Activated B cell treated with CpG ODN at 0.5 μM for 24 hours (primary cell): ENCODE measurements at regions of chr2 and their contacts with region 1.

Region 1: GRCh38 chr2:33511141-33511540 is 34.7 kb downstream of the RASGRP3 start:
- DNase-seq: no peak
- ATAC-seq: no peak
- H3K4me3 Mint-ChIP-seq: no peak overlapping the region
- H3K27ac Mint-ChIP-seq: peak overlapping the region; percentile 41
- H3K4me1 Mint-ChIP-seq: peaks cover 55% of the 10 kb centered on the region
- H3K27me3 Mint-ChIP-seq: no peaks in the 10 kb centered on the region
- CTCF ChIP-seq: no peak

Region 2: GRCh38 chr2:33068261-33068660 is 442.9 kb before region 1 on chr2:
- CTCF ChIA-PET with region 1: no interaction called
- POLR2A ChIA-PET with region 1: no interaction called
- intact Hi-C with region 1: no loop called
- DNase-seq: no peak
- ATAC-seq: no peak
- H3K4me3 Mint-ChIP-seq: no peak overlapping the region
- H3K27ac Mint-ChIP-seq: no peak overlapping the region
- H3K4me1 Mint-ChIP-seq: peaks cover 2% of the 10 kb centered on the region
- H3K27me3 Mint-ChIP-seq: peaks cover 2% of the 10 kb centered on the region
- CTCF ChIP-seq: no peak

Region 3: GRCh38 chr2:33497221-33497650 is 13.9 kb before region 1 on chr2:
- CTCF ChIA-PET with region 1: no interaction called
- POLR2A ChIA-PET with region 1: interaction called, 4 read pairs
- intact Hi-C with region 1: loop called (anchors 1 kb)
- DNase-seq: no peak
- ATAC-seq: peak; percentile 56
- H3K4me3 Mint-ChIP-seq: peak overlapping the region; percentile 62
- H3K27ac Mint-ChIP-seq: peak overlapping the region; percentile 87
- H3K4me1 Mint-ChIP-seq: peaks cover 96% of the 10 kb centered on the region
- H3K27me3 Mint-ChIP-seq: no peaks in the 10 kb centered on the region
- CTCF ChIP-seq: no peak

Region 4: DNA sequence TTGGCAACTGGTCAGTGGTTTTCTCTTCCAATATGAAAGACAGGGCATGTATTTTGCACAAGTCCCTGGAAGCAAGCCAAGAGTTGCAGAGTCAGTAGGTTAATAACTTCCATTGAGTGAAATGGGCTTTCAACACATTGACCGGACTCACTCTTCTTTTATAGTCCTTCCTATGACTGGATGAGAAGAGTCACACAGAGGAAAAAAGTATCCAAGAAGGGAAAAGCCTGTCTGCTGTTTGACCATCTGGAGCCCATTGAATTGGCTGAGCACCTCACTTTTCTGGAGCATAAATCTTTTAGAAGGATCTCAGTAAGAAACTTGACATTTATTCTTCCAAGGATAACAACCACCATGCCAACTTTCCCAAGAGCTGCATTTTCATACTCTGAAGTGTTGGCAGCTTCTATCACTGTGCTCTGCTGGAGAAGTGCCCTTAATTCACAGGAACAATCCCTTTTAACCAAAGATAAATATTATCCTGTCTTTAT is 10.7 kb after region 1 on chr2:
- CTCF ChIA-PET with region 1: no interaction called
- POLR2A ChIA-PET with region 1: no interaction called
- intact Hi-C with region 1: loop called (anchors 1 kb)
- DNase-seq: no peak
- ATAC-seq: no peak
- H3K4me3 Mint-ChIP-seq: no peak overlapping the region
- H3K27ac Mint-ChIP-seq: no peak overlapping the region
- H3K4me1 Mint-ChIP-seq: peaks cover 12% of the 10 kb centered on the region
- H3K27me3 Mint-ChIP-seq: no peaks in the 10 kb centered on the region
- CTCF ChIP-seq: no peak

Region 5: DNA sequence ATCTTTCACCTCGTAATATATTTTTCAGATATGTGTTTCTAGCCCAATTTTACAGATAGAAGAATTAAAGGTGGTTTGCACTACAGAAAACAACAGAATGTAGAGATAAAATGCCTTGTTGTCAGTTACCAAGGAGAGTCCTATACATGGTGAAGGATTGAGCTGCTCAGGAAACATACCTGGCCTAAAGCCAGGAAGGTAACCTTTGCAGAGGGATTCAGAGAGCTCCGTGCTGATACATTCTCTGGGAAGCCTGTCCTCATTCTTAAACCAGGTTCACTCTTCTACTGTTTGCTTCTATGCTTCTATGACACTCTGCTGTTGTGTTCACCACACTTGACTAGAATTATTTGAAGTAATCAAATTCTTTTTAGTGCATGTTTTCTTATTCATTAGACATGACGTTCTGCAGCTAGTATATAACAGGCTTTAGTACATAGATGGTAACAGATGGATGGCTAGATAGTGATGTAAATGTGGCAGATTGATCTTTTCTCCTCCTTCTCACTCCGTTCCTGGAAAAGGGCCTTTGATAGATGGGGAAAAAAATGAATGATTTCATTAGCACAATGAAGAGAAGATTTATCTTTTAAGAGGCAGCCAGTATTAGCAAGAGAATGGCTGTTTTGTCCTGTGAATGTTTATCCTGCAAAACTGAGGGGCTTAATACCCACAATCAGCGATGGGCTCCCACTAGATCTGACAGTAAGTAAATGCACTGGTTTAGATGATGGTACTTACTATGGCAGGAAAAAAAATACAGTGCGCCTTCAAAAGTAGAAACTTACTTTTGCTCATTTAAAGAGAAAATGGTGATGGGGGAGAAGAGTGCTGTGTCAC is 677.5 kb after region 1 on chr2:
- CTCF ChIA-PET with region 1: no interaction called
- POLR2A ChIA-PET with region 1: no interaction called
- intact Hi-C with region 1: no loop called
- DNase-seq: no peak
- ATAC-seq: no peak
- H3K4me3 Mint-ChIP-seq: no peak overlapping the region
- H3K27ac Mint-ChIP-seq: no peak overlapping the region
- H3K4me1 Mint-ChIP-seq: no peaks in the 10 kb centered on the region
- H3K27me3 Mint-ChIP-seq: no peaks in the 10 kb centered on the region
- CTCF ChIP-seq: no peak